ENCODE measurements at regions of chr18 and their contacts with region 1.

Region 1: GRCh38 chr18:63161761-63162195 is 157.8 kb downstream of the BCL2 start:
- DNase-seq: peak; percentile 90
- ATAC-seq: peak; percentile 92
- H3K4me3 Mint-ChIP-seq: peak overlapping the region; percentile 78
- H3K27ac Mint-ChIP-seq: peak overlapping the region; percentile 93
- H3K4me1 Mint-ChIP-seq: peaks cover 93% of the 10 kb centered on the region
- H3K27me3 Mint-ChIP-seq: no peaks in the 10 kb centered on the region

Region 2: GRCh38 chr18:63207143-63207790 is 45.5 kb after region 1 on chr18:
- CTCF ChIA-PET with region 1: interaction called, 26 read pairs
- POLR2A ChIA-PET with region 1: interaction called, 68 read pairs
- DNase-seq: peak; percentile 42
- ATAC-seq: peak; percentile 12
- H3K4me3 Mint-ChIP-seq: peak overlapping the region; percentile 82
- H3K27ac Mint-ChIP-seq: peak overlapping the region; percentile 88
- H3K4me1 Mint-ChIP-seq: peaks cover 90% of the 10 kb centered on the region
- H3K27me3 Mint-ChIP-seq: no peaks in the 10 kb centered on the region

Region 3: GRCh38 chr18:63216516-63217311 is 54.9 kb after region 1 on chr18:
- CTCF ChIA-PET with region 1: no interaction called
- POLR2A ChIA-PET with region 1: interaction called, 15 read pairs
- DNase-seq: peak; percentile 56
- ATAC-seq: peak; percentile 42
- H3K4me3 Mint-ChIP-seq: peak overlapping the region; percentile 72
- H3K27ac Mint-ChIP-seq: peak overlapping the region; percentile 90
- H3K4me1 Mint-ChIP-seq: peaks cover 98% of the 10 kb centered on the region
- H3K27me3 Mint-ChIP-seq: no peaks in the 10 kb centered on the region

Measured in activated CD8-positive, alpha-beta T cell treated with anti-CD3 and anti-CD28 coated beads, Interleukin-2, amount 10 ng/mL, durations not matched to agents 7 days and 5 days (primary cell).